H1 (cell line): ENCODE measurements at regions of chr11 and their contacts with region 1.

Region 1: GRCh38 chr11:107770551-107770951 is 58.7 kb upstream of the SLN start:
- DNase-seq: peak in 1 of 2 experiments; percentile 29
- H3K4me3 ChIP-seq: no peak overlapping the region
- H3K27ac ChIP-seq: no peak overlapping the region
- H3K4me1 ChIP-seq: no peaks in the 10 kb centered on the region
- H3K27me3 ChIP-seq: no peaks in the 10 kb centered on the region
- CTCF ChIP-seq: no peak
- EP300 ChIP-seq: no peak
- POLR2A ChIP-seq: no peak
- RAD21 ChIP-seq: no peak

Region 2: GRCh38 chr11:107590460-107591377 is 179.8 kb before region 1 on chr11 and contains the start of gene ELMOD1:
- CTCF ChIA-PET with region 1: no interaction called
- POLR2A ChIA-PET with region 1: no interaction called
- DNase-seq: peak in 1 of 2 experiments; percentile 76
- H3K4me3 ChIP-seq: peak within 1 kb of the TSS; percentile 84 to 87 (median 85)
- H3K27ac ChIP-seq: no peak within 1 kb of the TSS
- H3K4me1 ChIP-seq: peaks cover 0 to 16% (median 10%) of the 10 kb centered on the region in 4 experiments; a peak in 6 of 7 replicates
- H3K27me3 ChIP-seq: peaks cover 17 to 57% (median 46%) of the 10 kb centered on the region in 4 experiments
- CTCF ChIP-seq: no peak
- EP300 ChIP-seq: no peak
- POLR2A ChIP-seq: no peak
- RAD21 ChIP-seq: no peak
- total RNA-seq, gene ELMOD1: 1.6 and 1.7 TPM in 2 replicates

Region 3: GRCh38 chr11:107757661-107758060 is 12.9 kb before region 1 on chr11:
- CTCF ChIA-PET with region 1: interaction called, 61 read pairs
- POLR2A ChIA-PET with region 1: no interaction called
- DNase-seq: no peak
- H3K4me3 ChIP-seq: no peak overlapping the region
- H3K27ac ChIP-seq: no peak overlapping the region
- H3K4me1 ChIP-seq: no peaks in the 10 kb centered on the region
- H3K27me3 ChIP-seq: no peaks in the 10 kb centered on the region
- CTCF ChIP-seq: peak; percentile 25 to 63 (median 37)
- EP300 ChIP-seq: no peak
- POLR2A ChIP-seq: no peak
- RAD21 ChIP-seq: peak; percentile 27 to 51; a peak in 3 of 4 replicates

Region 4: DNA sequence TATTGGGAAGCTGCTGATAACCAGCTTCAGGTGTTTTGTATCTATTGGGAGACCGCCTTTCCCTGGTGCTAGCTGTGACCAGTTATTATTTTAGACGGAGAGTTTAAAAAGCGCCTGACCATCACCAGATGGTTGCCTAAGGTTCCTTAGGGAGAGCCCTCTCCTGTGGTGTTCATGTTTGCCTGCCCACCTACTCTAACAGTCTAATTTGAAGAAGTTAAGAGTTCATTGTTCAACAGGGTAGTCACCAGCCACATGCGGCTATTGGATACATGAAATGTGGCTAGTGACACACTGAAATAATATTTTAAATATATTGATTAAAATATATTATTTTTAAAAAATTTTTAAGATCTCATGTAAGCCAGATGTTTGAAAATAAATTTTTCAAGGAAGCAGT is 12.6 kb after region 1 on chr11:
- CTCF ChIA-PET with region 1: interaction called, 10 read pairs
- POLR2A ChIA-PET with region 1: no interaction called
- DNase-seq: no peak
- H3K4me3 ChIP-seq: no peak overlapping the region
- H3K27ac ChIP-seq: no peak overlapping the region
- H3K4me1 ChIP-seq: peaks cover 0 to 3% (median 0%) of the 10 kb centered on the region in 4 experiments; a peak in 1 of 7 replicates
- H3K27me3 ChIP-seq: no peaks in the 10 kb centered on the region
- CTCF ChIP-seq: no peak
- EP300 ChIP-seq: no peak
- POLR2A ChIP-seq: no peak
- RAD21 ChIP-seq: no peak

Region 5: DNA sequence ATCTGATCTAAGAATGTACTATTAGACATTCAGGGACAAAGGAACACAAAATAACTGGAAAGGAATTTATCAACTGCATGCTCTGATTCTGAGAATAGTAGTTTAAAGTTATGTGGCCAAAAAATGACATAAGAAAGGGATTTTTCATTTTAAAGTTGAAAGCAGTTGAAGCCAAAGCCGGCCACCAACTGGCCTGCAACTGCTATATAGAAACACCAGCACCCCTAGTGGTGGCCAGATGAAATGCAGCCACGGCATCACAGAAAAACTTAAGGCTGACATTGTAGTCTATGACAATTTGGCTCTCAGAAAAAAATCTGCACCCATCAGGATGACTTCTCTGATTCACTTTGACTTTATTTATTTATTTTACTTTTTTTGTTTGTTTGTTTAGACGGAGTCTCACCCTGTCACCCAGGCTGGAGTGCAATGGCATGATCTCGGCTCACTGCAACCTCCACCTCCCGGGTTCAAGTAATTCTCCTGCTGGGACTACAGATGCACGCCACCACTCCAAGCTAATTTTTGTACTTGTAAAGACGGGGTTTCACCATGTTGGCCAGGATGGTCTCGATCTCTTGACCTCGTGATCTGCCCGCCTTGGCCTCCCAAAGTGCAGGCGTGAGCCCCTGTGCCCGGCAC is 28.8 kb after region 1 on chr11:
- CTCF ChIA-PET with region 1: interaction called, 25 read pairs
- POLR2A ChIA-PET with region 1: no interaction called
- DNase-seq: peak; percentile 9 to 82
- H3K4me3 ChIP-seq: no peak overlapping the region
- H3K27ac ChIP-seq: no peak overlapping the region
- H3K4me1 ChIP-seq: no peaks in the 10 kb centered on the region
- H3K27me3 ChIP-seq: no peaks in the 10 kb centered on the region
- CTCF ChIP-seq: peak; percentile 66 to 90 (median 87)
- EP300 ChIP-seq: no peak
- POLR2A ChIP-seq: no peak
- RAD21 ChIP-seq: peak; percentile 63 to 71